Activated T-helper 1 cell treated with anti-CD3 and anti-CD28 coated beads, Interleukin-12 subunit alpha, Interleukin-12 subunit beta, Interleukin-2, Interleukin-4 antibody, amounts not matched to agents 30 ng/mL and 10 ng/mL and 1 ng/mL, durations not matched to agents 14 hours and 24 hours and 36 hours (primary cell): ENCODE measurements at regions of chr5 and their contacts with region 1.

Region 1: DNA sequence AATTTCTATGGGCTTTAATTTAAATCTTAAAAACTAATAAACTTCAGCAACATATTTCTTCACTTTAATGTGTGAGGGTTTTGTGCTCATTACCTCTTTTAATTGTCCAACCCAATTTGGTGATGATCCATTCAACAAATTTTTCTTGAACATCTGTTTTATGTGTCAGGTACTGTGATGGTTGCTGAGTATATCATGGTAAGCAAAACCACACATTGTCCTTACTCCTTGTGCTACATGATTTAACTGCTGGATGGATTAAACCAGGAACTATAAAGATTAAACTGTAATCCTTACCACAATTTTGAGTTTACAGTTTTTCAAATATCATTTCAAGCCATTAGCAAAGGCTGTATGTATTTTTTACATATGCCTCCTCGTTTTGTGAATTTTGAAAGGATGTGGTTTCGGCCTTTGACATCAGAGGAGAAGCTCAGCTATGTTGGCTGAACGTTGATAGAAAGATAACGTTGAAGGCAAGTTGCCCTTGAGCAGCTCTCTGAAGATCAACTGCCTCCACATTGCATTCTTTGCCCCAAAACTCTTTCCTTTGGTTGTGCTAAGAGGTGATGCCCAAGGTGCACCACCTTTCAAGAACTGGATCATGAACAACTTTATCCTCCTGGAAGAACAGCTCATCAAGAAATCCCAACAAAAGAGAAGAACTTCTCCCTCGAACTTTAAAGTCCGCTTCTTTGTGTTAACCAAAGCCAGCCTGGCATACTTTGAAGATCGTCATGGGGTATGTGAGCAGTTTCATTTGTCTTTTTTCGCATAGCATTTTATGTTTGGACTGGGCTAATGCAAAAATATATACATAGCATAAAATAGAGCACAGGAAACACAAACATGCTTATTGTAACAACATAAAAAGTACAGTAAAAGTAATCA is at the start of gene ITK:
- DNase-seq: peak; percentile 52
- H3K4me3 Mint-ChIP-seq: peak within 1 kb of the TSS; percentile 100
- H3K27ac Mint-ChIP-seq: peak within 1 kb of the TSS; percentile 100
- H3K4me1 Mint-ChIP-seq: peaks cover 57% of the 10 kb centered on the region
- H3K27me3 Mint-ChIP-seq: no peaks in the 10 kb centered on the region
- total RNA-seq, gene ITK: 251 and 259 TPM in 2 replicates

Region 2: DNA sequence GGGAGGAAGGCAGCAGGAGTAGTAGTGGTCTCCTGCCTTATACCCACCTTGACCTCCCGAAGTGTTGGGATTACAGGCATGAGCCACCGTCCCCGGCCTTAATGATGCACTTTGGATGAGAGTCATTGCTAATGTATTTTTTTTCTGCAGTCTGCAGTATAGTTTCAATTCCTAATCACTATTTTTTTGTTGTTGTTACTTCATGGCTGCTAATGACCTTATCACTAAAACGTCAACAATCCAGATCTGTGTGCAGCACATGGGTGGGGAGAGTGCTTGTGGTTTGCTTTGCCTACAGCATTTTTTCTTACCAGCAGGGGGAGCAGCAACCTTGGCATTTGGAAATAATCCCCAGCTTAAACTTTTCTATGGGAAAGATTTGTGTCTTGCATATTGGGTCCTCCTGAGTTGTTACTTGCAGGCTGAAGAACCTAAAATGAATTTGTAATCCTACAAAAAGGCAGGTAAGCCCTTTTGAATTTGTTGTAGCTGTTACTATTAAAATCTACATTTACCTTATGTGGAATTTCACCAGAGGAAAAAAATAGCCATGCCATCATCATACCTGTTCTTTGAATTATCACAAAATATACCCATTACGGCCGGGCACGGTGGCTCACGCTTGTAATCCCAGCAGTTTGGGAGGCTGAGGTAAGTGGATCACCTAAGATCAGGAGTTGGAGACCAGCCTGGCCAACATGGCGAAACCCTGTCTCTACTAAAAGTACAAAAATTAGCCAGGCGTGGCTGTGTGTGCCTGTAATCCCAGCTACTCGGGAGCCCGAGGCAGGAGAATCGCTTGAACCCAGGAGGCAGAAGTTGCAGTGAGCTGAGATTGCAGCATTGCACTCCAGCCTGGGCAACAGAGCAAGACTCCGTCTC is 31.6 kb before region 1 on chr5:
- intact Hi-C with region 1: loop called (anchors 1 kb)
- DNase-seq: peak; percentile 74
- H3K4me3 Mint-ChIP-seq: no peak overlapping the region
- H3K27ac Mint-ChIP-seq: peak overlapping the region; percentile 67
- H3K4me1 Mint-ChIP-seq: peaks cover 43% of the 10 kb centered on the region
- H3K27me3 Mint-ChIP-seq: no peaks in the 10 kb centered on the region

Region 3: DNA sequence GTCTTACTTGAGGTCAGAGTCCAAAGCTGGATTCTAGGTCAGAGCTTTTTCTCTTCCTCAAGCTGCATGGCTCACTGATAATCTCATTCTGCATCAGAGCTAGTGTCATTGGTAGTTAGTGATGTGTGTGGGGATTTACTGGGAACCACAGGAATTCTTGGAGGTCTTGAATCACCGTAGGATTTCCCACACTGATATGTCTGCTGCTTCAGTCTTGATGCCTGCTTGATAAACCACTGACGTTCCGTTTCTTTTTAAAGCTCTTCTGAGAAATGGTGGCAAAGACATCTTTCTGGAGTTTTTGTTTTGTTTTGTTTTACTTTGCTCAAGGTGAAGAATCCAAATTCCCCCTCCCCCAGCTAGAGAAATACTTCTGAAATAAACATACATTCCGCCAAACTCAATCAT is 13.4 kb before region 1 on chr5:
- intact Hi-C with region 1: loop called (anchors 1 kb)
- DNase-seq: no peak
- H3K4me3 Mint-ChIP-seq: peak overlapping the region; percentile 47
- H3K27ac Mint-ChIP-seq: peak overlapping the region; percentile 85
- H3K4me1 Mint-ChIP-seq: peaks cover 72% of the 10 kb centered on the region
- H3K27me3 Mint-ChIP-seq: no peaks in the 10 kb centered on the region

Region 4: DNA sequence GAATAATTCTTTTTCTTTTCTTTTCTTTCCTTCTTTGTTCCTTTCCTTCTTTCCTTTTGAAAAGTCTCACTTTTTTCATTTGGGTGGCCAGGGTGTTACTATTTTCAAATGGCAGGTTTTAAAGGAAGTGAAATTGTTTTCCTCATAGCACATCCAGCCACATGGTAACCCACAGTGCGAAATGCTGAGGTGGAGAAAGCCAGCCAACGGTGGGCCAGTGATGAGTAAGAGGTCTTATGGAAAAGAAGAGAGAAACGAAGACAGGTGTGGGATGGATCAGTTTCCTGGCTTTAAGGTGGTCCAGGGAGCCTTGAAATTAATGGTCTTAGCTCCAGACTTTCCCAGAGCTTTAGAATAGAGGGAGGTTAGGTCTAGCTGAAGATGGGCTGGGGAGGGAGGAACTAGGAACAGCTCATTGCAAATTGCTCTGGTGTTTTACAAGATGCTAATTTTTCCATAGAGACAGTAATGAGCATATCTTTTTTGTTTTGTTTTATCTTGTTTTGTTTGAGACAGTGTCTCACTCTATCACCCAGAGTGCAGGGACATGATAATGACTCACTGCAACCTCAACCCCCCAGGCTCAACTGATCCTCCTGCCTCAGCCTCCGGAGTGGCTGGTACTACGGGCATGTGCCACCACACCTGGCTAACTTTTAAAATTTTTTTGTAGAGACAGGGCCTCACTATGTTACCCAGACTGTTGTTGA is 17.8 kb after region 1 on chr5:
- intact Hi-C with region 1: loop called (anchors 1 kb)
- DNase-seq: no peak
- H3K4me3 Mint-ChIP-seq: peak overlapping the region; percentile 68
- H3K27ac Mint-ChIP-seq: peak overlapping the region; percentile 94
- H3K4me1 Mint-ChIP-seq: peaks cover 94% of the 10 kb centered on the region
- H3K27me3 Mint-ChIP-seq: no peaks in the 10 kb centered on the region